ENCODE measurements at regions of chr1 and their contacts with region 1.

Region 1: GRCh38 chr1:23436520-23437354 is 12.2 kb upstream of the TCEA3 start:
- DNase-seq: no peak
- ATAC-seq: peak; percentile 46 to 63 (median 56)
- H3K4me3 ChIP-seq: no peak overlapping the region
- H3K27ac ChIP-seq: peak overlapping the region; percentile 42
- H3K4me1 ChIP-seq: no peaks in the 10 kb centered on the region
- H3K27me3 ChIP-seq: no peaks in the 10 kb centered on the region
- CTCF ChIP-seq: no peak

Region 2: DNA sequence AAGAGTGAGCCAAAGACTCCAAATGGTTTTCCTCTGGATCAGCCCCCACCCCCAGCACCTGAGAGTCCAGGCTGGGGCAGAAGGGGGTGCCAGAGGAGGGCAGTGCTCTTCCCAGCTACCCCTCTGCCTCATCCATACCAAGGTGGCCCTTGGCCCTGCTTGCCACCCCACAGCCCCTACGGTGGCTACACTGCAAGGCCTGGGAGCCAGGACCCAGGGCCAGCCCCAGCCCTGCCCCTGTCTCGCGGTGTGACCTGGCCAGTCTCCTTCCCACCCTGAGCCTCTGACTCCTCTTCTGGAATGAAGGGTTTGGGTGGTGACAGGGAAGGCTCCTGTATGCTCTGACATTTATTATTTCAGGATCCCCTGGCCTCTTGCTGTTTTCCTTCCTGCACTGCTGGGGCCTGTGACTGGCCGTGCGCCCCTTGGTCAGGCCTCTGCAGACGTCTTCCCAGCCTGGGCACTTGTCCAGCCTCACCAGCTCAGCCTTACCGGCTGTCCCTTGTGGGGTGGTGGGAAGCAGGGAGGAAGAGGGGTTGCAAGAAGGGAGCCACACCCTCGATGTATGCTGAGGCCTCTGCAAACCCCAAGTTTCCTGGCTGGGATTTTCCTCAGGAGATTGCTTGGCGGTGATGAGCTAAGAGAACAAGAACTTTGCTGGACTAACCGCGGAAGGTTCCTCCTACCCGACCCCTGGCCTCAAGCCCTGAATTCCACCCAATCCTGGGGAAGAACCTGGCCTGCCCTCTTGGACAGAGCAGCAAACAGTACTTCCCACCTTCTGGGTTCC is 33.7 kb after region 1 on chr1:
- intact Hi-C with region 1: loop called in 1 of 2 experiments (anchors 5 kb)
- DNase-seq: peak; percentile 80 to 82
- ATAC-seq: peak; percentile 10 to 38 (median 24)
- H3K4me3 ChIP-seq: no peak overlapping the region
- H3K27ac ChIP-seq: peak overlapping the region; percentile 53
- H3K4me1 ChIP-seq: peaks cover 48% of the 10 kb centered on the region
- H3K27me3 ChIP-seq: no peaks in the 10 kb centered on the region
- CTCF ChIP-seq: no peak

Region 3: GRCh38 chr1:23682946-23683345 is 246.2 kb after region 1 on chr1:
- intact Hi-C with region 1: no loop called
- DNase-seq: no peak
- ATAC-seq: no peak
- H3K4me3 ChIP-seq: no peak overlapping the region
- H3K27ac ChIP-seq: no peak overlapping the region
- H3K4me1 ChIP-seq: no peaks in the 10 kb centered on the region
- H3K27me3 ChIP-seq: peaks cover 0 to 1% (median 0%) of the 10 kb centered on the region in 3 donors
- CTCF ChIP-seq: no peak

Measured in psoas muscle (tissue), 8 donors.